ENCODE measurements at regions of chr11 and their contacts with region 1.

Region 1: GRCh38 chr11:76495019-76495418 is 50.2 kb downstream of the EMSY start:
- DNase-seq: peak in 2 of 9 experiments; percentile 23 to 55
- ATAC-seq: peak; percentile 54
- H3K4me3 ChIP-seq: no peak overlapping the region
- H3K4me3 Mint-ChIP-seq: peak overlapping the region; percentile 29
- H3K27ac ChIP-seq: peak overlapping the region; percentile 32 to 69
- H3K27ac Mint-ChIP-seq: peak overlapping the region; percentile 89
- H3K4me1 ChIP-seq: no peaks in the 10 kb centered on the region
- H3K4me1 Mint-ChIP-seq: peaks cover 15% of the 10 kb centered on the region
- H3K27me3 ChIP-seq: no peaks in the 10 kb centered on the region
- H3K27me3 Mint-ChIP-seq: no peaks in the 10 kb centered on the region
- CTCF ChIP-seq: no peak

Region 2: DNA sequence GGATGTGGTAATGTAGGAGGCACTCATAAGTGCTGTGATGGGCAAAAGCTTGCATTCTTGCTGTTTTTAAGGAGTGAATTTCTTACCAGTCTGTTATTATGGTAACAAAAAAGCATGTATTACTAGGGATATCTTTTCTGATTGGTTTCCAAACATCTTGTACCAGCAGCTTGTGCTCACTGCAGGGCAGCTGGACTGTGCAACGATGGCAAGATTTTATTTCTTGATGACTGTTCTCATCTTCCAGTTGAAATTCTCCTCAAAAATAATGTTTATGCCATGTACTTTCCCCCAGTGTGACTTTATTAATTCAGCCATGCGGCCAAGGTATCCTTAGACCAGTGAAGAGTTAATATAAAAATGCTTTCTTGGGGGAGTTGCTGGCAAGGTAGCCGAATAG is 14.8 kb before region 1 on chr11:
- CTCF ChIA-PET with region 1: no interaction called
- POLR2A ChIA-PET with region 1: no interaction called
- intact Hi-C with region 1: no loop called
- DNase-seq: no peak
- ATAC-seq: no peak
- H3K4me3 ChIP-seq: no peak overlapping the region
- H3K4me3 Mint-ChIP-seq: no peak overlapping the region
- H3K27ac ChIP-seq: no peak overlapping the region
- H3K27ac Mint-ChIP-seq: no peak overlapping the region
- H3K4me1 ChIP-seq: peaks cover 4% of the 10 kb centered on the region
- H3K4me1 Mint-ChIP-seq: peaks cover 21% of the 10 kb centered on the region
- H3K27me3 ChIP-seq: no peaks in the 10 kb centered on the region
- H3K27me3 Mint-ChIP-seq: no peaks in the 10 kb centered on the region
- CTCF ChIP-seq: no peak

Region 3: DNA sequence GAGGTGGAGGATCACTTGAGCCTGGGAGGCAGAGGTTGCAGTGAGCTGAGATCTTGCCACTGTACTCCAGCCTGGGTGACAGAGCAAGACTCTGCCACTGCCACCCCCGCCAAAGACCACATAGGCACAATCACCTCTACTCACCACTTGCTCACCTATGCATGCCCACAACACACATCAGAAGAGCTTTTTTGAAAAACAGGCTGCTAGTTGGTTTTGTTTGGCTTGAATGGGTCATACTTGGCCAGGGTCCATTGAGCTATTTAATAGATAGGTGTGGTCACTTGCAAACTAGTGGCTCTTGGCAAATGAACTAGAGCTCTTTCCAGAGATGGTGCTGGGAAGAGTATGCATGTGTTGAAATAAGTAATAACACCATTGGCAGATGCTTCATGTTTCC is 29.9 kb after region 1 on chr11:
- CTCF ChIA-PET with region 1: no interaction called
- POLR2A ChIA-PET with region 1: no interaction called
- intact Hi-C with region 1: loop called in 1 of 2 experiments (anchors 5 kb)
- DNase-seq: no peak
- ATAC-seq: no peak
- H3K4me3 ChIP-seq: no peak overlapping the region
- H3K4me3 Mint-ChIP-seq: no peak overlapping the region
- H3K27ac ChIP-seq: no peak overlapping the region
- H3K27ac Mint-ChIP-seq: no peak overlapping the region
- H3K4me1 ChIP-seq: no peaks in the 10 kb centered on the region
- H3K4me1 Mint-ChIP-seq: no peaks in the 10 kb centered on the region
- H3K27me3 ChIP-seq: no peaks in the 10 kb centered on the region
- H3K27me3 Mint-ChIP-seq: no peaks in the 10 kb centered on the region
- CTCF ChIP-seq: no peak